ENCODE measurements at regions of chr14 and their contacts with region 1.

Region 1: GRCh38 chr14:104130974-104131651 is 7.3 kb upstream of the KIF26A start:
- DNase-seq: peak; percentile 61
- H3K4me3 Mint-ChIP-seq: no peak overlapping the region
- H3K27ac Mint-ChIP-seq: no peak overlapping the region
- H3K4me1 Mint-ChIP-seq: no peaks in the 10 kb centered on the region
- H3K27me3 Mint-ChIP-seq: peaks cover 55% of the 10 kb centered on the region
- CTCF ChIP-seq: peak; percentile 80

Region 2: GRCh38 chr14:104094709-104095438 is 36.2 kb before region 1 on chr14:
- CTCF ChIA-PET with region 1: interaction called, 23 read pairs
- POLR2A ChIA-PET with region 1: no interaction called
- intact Hi-C with region 1: loop called (anchors 1 kb)
- DNase-seq: peak; percentile 56
- H3K4me3 Mint-ChIP-seq: no peak overlapping the region
- H3K27ac Mint-ChIP-seq: no peak overlapping the region
- H3K4me1 Mint-ChIP-seq: no peaks in the 10 kb centered on the region
- H3K27me3 Mint-ChIP-seq: no peaks in the 10 kb centered on the region
- CTCF ChIP-seq: peak; percentile 95

Region 3: DNA sequence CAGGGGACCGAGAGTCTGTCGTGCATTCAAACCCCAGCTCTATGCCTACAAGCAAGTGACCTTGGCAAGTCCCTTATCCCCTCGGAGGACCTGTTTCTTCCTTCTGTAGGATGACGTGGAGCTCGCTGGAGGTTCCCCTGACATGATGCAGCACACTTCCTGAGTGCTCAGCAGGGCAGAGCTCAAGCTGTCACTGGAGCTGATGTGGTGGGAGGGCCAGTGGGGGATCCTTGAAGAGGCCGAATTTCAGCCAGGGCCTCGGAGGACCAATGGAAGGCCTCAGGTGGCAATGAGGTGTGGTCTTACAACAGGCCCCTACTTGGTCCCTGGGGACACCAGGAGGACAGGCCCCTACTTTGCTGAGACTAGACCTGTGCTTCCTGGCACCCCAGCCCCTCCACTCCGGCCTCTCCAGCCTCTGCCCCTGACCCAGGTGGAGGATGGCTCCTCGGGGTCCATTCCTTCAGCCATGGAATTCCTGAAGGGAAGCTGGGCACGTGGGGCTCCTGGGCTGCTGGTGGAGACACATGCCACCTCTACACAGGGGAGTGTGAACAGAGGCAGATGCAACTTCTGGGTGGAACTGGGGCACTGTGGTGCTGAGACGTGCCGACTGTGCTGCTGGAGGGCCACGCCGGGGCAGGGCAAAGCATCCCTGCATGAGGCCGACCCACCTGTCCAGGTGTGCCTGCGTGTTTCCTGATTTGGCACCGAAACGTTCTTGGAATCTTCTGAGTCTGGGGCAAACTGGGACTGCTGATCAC is 11.4 kb before region 1 on chr14:
- CTCF ChIA-PET with region 1: interaction called, 14 read pairs
- POLR2A ChIA-PET with region 1: no interaction called
- intact Hi-C with region 1: no loop called
- DNase-seq: no peak
- H3K4me3 Mint-ChIP-seq: no peak overlapping the region
- H3K27ac Mint-ChIP-seq: no peak overlapping the region
- H3K4me1 Mint-ChIP-seq: no peaks in the 10 kb centered on the region
- H3K27me3 Mint-ChIP-seq: peaks cover 29% of the 10 kb centered on the region
- CTCF ChIP-seq: no peak

Region 4: GRCh38 chr14:104177945-104178678 is 47.0 kb after region 1 on chr14:
- CTCF ChIA-PET with region 1: no interaction called
- POLR2A ChIA-PET with region 1: no interaction called
- intact Hi-C with region 1: no loop called
- DNase-seq: no peak
- H3K4me3 Mint-ChIP-seq: no peak overlapping the region
- H3K27ac Mint-ChIP-seq: no peak overlapping the region
- H3K4me1 Mint-ChIP-seq: no peaks in the 10 kb centered on the region
- H3K27me3 Mint-ChIP-seq: no peaks in the 10 kb centered on the region
- CTCF ChIP-seq: no peak